SK-N-SH (cell line): ENCODE measurements at regions of chr10 and their contacts with region 1.

Region 1: DNA sequence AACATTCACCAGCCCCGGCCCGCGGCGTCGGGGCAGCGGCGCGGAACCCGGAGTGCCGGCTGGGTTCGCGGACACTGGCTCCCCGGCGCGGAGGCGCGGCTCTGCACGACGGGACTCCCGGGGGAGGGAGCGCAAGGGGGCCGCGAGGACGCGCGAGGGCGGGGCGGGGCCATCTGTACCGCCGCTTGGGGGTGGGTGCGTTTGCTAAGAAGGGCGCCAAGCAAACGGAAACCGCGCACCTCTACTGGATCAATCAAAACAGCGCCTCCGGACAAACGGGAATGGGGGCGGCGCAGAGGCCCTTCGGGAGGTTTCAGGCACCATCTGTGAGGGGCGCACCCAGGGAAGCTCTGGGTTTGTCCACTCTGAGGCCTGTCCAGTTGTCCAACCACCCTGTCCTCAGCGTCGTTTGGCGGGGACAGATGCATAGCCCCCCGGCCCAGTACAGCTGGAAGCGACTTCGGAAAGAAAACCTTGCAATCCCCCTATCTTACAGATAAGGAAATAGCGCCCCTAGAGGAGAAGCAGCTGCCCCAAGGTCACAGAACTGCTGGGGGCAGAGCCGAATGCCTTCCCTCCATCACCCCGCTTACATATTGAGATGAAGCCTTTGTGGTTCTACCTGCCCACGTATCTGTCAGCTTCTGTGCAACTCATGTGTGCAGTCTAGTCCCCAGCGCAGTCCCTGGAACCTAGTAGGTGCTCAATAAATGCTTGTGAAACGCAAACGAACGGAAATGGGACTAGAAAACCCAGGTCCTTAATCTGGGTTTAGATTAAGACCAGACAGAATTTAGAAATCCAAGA is 10.7 kb upstream of the SLIT1 start:
- DNase-seq: peak; percentile 90
- H3K4me3 ChIP-seq: peak overlapping the region; percentile 51 to 64
- H3K27ac ChIP-seq: no peak overlapping the region
- H3K4me1 ChIP-seq: peaks cover 0 to 5% of the 10 kb centered on the region in 2 experiments; a peak in 1 of 4 replicates
- H3K27me3 ChIP-seq: peaks cover 10% of the 10 kb centered on the region
- CTCF ChIP-seq: peak; percentile 79
- EP300 ChIP-seq: no peak
- RAD21 ChIP-seq: peak; percentile 64

Region 2: GRCh38 chr10:97037365-97038361 is 158.8 kb before region 1 on chr10:
- CTCF ChIA-PET with region 1: interaction called, 20 read pairs
- POLR2A ChIA-PET with region 1: no interaction called
- DNase-seq: peak; percentile 89
- H3K4me3 ChIP-seq: peak overlapping the region in 1 of 2 experiments; percentile 20; a peak in 1 of 4 replicates
- H3K27ac ChIP-seq: no peak overlapping the region
- H3K4me1 ChIP-seq: peaks cover 0 to 4% of the 10 kb centered on the region in 2 experiments; a peak in 1 of 4 replicates
- H3K27me3 ChIP-seq: no peaks in the 10 kb centered on the region
- CTCF ChIP-seq: peak; percentile 81
- EP300 ChIP-seq: no peak
- RAD21 ChIP-seq: peak; percentile 87

Region 3: DNA sequence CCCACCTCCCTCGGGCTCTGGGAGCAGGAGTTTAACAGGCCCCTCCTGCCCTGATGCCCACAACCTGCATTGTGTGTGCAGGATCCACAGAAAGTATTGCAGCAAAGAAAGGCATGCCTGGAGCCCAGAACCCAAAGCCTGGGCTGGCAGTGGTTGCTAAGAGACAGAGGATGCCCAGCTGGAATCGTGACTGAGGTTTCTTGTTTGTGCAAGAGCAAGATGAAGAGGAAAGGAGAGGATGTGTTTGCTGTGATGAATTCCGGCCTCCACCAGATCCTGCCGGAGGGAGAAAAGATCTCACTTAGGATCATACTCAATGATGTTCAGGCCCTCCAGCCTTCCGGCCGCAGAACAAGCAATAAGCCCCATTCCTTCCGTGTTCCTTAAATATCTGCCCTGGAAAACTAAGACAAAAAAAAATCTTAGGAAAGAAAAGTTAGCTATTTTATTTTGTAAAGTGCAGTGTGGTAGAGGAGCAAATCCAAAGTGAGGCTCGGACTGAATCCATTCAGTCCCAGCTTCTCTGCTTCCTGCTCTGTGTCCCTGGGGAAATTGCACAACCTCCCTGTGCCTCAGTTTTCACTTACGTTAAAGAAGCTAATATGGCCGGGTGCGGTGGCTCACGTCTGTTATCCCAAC is 67.8 kb before region 1 on chr10:
- CTCF ChIA-PET with region 1: interaction called, 13 read pairs
- POLR2A ChIA-PET with region 1: no interaction called
- DNase-seq: peak; percentile 60
- H3K4me3 ChIP-seq: no peak overlapping the region
- H3K27ac ChIP-seq: no peak overlapping the region
- H3K4me1 ChIP-seq: peaks cover 0 to 17% of the 10 kb centered on the region in 2 experiments; a peak in 1 of 4 replicates
- H3K27me3 ChIP-seq: no peaks in the 10 kb centered on the region; the same call in 1 of the 2 replicates
- CTCF ChIP-seq: no peak
- EP300 ChIP-seq: no peak
- RAD21 ChIP-seq: no peak

Region 4: DNA sequence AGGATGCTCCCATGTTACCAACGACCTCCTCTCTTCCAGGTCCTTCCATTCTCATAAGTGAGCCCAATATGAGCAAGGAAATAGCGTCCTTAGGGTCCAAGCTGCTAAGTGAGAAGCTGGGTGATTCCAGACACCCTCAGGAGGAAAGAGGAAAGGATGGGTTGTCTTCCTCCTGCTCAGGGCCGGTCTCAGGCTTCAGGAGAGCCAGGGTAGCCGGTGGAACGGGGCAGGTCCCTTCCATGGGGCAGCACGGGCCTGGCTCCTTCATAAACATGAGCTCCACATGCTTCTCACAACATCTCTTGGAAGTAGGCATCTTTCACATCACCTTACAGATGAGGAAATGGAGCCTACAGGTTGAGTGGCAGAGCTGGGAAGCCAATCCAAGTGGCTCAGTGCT is 23.4 kb before region 1 on chr10:
- CTCF ChIA-PET with region 1: interaction called, 156 read pairs
- POLR2A ChIA-PET with region 1: no interaction called
- DNase-seq: no peak
- H3K4me3 ChIP-seq: no peak overlapping the region
- H3K27ac ChIP-seq: no peak overlapping the region
- H3K4me1 ChIP-seq: peaks cover 0 to 17% of the 10 kb centered on the region in 2 experiments; a peak in 1 of 4 replicates
- H3K27me3 ChIP-seq: peaks cover 20% of the 10 kb centered on the region; the same call in 1 of the 2 replicates
- CTCF ChIP-seq: no peak
- EP300 ChIP-seq: no peak
- RAD21 ChIP-seq: no peak

Region 5: DNA sequence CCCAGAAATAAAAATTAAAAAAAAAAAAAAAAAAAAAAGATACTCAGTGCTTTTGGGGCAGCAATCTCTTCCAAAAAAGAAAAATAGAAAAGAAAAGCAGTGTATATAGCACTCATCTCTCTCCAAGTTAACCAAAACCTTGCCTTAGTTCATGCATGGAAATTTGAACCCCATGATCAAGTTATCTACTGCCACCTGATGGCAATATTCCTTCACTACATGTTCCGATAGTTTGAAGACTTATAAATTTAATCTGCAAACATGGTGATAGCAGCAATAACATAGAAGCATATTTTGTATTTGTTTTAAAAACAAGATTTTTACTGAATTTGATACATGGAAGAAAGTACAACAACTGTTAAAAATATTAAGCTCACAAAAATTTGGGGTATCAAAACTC is 38.0 kb after region 1 on chr10:
- CTCF ChIA-PET with region 1: interaction called, 23 read pairs
- POLR2A ChIA-PET with region 1: no interaction called
- DNase-seq: peak; percentile 49
- H3K4me3 ChIP-seq: no peak overlapping the region
- H3K27ac ChIP-seq: no peak overlapping the region
- H3K4me1 ChIP-seq: no peaks in the 10 kb centered on the region
- H3K27me3 ChIP-seq: no peaks in the 10 kb centered on the region
- CTCF ChIP-seq: peak; percentile 82
- EP300 ChIP-seq: no peak
- RAD21 ChIP-seq: peak; percentile 84